Right cardiac atrium (tissue), 5 donors: ENCODE measurements at regions of chr7 and their contacts with region 1.

Region 1: DNA sequence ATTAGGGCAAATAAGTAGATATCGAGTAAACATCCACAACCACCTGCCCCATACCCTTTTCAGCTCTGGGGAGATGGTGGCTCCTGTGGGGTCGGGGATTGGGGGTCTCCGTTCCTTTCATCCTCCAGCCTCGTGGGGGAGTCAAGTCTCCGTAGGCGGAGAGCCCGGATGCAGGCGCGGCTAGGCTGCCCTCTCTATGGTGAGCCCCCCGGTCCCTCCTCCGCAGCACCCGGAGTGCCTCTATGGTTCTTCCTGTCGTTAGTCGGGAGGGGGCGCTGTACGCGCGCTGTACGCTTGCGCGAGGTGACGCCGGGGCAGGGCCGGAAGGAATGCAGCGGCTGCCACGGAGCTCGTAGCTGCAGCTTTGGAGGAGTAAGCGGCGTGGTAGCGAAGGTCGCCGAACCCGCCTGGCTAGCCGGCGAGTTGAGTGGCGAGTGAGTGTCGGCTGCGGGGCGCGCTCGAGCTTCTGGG is 14.8 kb upstream of the MMD2 start:
- DNase-seq: peak; percentile 92 to 96 (median 96)
- ATAC-seq: peak; percentile 98 to 99
- H3K4me3 ChIP-seq: peak overlapping the region; percentile 60
- H3K27ac ChIP-seq: peak overlapping the region; percentile 69
- H3K4me1 ChIP-seq: no peaks in the 10 kb centered on the region
- H3K27me3 ChIP-seq: no peaks in the 10 kb centered on the region

Region 2: GRCh38 chr7:4549681-4550080 is 424.1 kb before region 1 on chr7:
- intact Hi-C with region 1: no loop called
- DNase-seq: peak; percentile 76 to 93 (median 91)
- ATAC-seq: peak; percentile 97
- H3K4me3 ChIP-seq: no peak overlapping the region
- H3K27ac ChIP-seq: no peak overlapping the region
- H3K4me1 ChIP-seq: no peaks in the 10 kb centered on the region
- H3K27me3 ChIP-seq: no peaks in the 10 kb centered on the region

Region 3: DNA sequence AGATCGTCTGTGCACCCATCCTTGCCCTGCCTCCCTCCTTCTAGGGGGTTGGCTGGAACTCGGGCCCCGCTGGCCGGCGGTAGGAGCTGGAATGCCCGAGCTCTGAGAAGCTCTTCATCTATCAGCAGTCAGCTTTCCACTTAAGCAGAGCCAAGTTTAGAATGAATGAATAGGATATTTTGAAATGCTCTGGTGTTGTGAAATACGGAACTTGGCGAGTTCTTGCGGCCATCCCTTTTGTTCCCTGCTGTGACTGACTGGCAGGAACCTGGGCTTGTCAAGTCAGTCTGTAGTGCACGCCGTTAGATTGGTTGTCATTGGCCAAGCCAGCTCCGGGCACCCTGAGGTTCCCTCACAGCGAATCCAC is 258.4 kb before region 1 on chr7:
- intact Hi-C with region 1: no loop called
- DNase-seq: peak; percentile 73 to 88 (median 85)
- ATAC-seq: peak; percentile 91 to 93
- H3K4me3 ChIP-seq: no peak overlapping the region
- H3K27ac ChIP-seq: peak overlapping the region; percentile 46
- H3K4me1 ChIP-seq: no peaks in the 10 kb centered on the region
- H3K27me3 ChIP-seq: no peaks in the 10 kb centered on the region

Region 4: GRCh38 chr7:5088906-5089305 is 115.1 kb after region 1 on chr7:
- intact Hi-C with region 1: loop called in 1 of 4 experiments (anchors 5 kb)
- DNase-seq: no peak
- ATAC-seq: no peak
- H3K4me3 ChIP-seq: no peak overlapping the region
- H3K27ac ChIP-seq: no peak overlapping the region
- H3K4me1 ChIP-seq: no peaks in the 10 kb centered on the region
- H3K27me3 ChIP-seq: no peaks in the 10 kb centered on the region